ENCODE measurements at regions of chr11 and their contacts with region 1.

Region 1: GRCh38 chr11:66408488-66409214 is 12.2 kb upstream of the NPAS4 start:
- DNase-seq: peak; percentile 88 to 94 (median 91)
- H3K4me3 ChIP-seq: peak overlapping the region in 5 of 7 experiments; percentile 14 to 48 (median 25)
- H3K27ac ChIP-seq: no peak overlapping the region
- H3K4me1 ChIP-seq: peaks cover 0 to 9% (median 6%) of the 10 kb centered on the region in 4 experiments
- H3K27me3 ChIP-seq: peaks cover 2 to 65% (median 26%) of the 10 kb centered on the region in 5 experiments

Region 2: DNA sequence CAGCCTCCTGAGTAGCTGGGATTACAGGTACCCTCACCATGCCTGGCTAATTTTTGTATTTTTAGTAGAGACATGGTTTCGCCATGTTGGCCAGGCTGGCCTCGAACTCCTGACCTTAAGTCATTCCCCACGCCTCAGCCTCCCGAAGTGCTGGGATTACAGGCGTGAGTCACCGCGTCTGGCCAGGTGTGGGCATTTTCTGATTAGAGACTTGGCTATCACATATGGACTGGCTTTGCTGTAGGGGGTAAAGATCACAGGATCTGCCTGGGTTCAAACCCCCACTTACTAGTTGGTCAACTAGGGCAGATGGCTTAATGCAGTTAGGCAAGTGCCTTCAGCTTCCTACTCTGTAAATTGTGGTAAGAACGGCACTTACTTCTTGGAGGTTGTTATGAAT is 98.3 kb before region 1 on chr11:
- CTCF ChIA-PET with region 1: no interaction called
- POLR2A ChIA-PET with region 1: no interaction called
- DNase-seq: no peak
- H3K4me3 ChIP-seq: no peak overlapping the region
- H3K27ac ChIP-seq: no peak overlapping the region
- H3K4me1 ChIP-seq: peaks cover 0 to 23% (median 20%) of the 10 kb centered on the region in 4 experiments
- H3K27me3 ChIP-seq: peaks cover 0 to 2% (median 0%) of the 10 kb centered on the region in 5 experiments

Region 3: GRCh38 chr11:66386171-66387069 is 22.2 kb before region 1 on chr11:
- CTCF ChIA-PET with region 1: interaction called, 30 read pairs
- POLR2A ChIA-PET with region 1: no interaction called
- DNase-seq: peak; percentile 78 to 90 (median 79)
- H3K4me3 ChIP-seq: peak overlapping the region in 4 of 7 experiments; percentile 35 to 63 (median 49)
- H3K27ac ChIP-seq: no peak overlapping the region
- H3K4me1 ChIP-seq: peaks cover 0 to 7% (median 4%) of the 10 kb centered on the region in 4 experiments
- H3K27me3 ChIP-seq: peaks cover 0 to 7% (median 0%) of the 10 kb centered on the region in 5 experiments

Region 4: GRCh38 chr11:66421492-66422205 is 13.0 kb after region 1 on chr11:
- CTCF ChIA-PET with region 1: interaction called, 37 read pairs
- POLR2A ChIA-PET with region 1: no interaction called
- DNase-seq: peak; percentile 81 to 90 (median 85)
- H3K4me3 ChIP-seq: no peak overlapping the region
- H3K27ac ChIP-seq: no peak overlapping the region
- H3K4me1 ChIP-seq: peaks cover 0 to 2% (median 0%) of the 10 kb centered on the region in 4 experiments
- H3K27me3 ChIP-seq: peaks cover 0 to 46% (median 21%) of the 10 kb centered on the region in 5 experiments

Region 5: DNA sequence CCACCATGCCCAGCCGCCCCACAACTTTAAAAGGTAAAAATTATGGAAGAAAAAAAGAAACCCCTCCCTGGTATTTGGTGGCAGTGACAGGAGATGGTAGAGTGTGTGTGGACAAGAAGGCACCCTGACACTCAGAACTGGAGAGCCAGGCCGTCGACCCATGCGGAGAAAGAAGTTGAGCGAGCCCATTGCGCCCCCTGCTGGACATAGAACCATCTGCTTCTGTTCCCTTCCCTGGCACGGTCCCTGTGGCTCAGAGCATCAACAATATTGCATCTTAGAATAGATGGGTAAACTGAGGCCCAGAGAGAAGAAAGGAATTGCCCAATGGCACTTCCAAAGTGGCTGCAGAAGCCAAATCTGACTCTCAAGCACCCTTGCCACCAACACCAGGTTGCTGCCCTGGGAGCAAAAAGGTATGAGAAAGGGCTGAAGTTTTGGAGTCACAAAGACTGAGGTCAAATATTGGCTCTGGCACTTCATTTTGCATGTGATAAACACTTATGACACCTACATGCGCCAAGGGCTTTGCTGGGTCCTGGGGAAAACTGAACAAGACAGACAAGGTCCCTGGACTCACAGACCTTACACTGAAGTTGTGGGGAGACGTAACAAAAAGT is 21.4 kb after region 1 on chr11:
- CTCF ChIA-PET with region 1: interaction called, 37 read pairs
- POLR2A ChIA-PET with region 1: no interaction called
- DNase-seq: peak; percentile 67 to 85 (median 77)
- H3K4me3 ChIP-seq: no peak overlapping the region
- H3K27ac ChIP-seq: no peak overlapping the region
- H3K4me1 ChIP-seq: peaks cover 0 to 3% (median 0%) of the 10 kb centered on the region in 4 experiments
- H3K27me3 ChIP-seq: peaks cover 0 to 4% (median 0%) of the 10 kb centered on the region in 5 experiments

Region 6: GRCh38 chr11:66438504-66439466 is 30.1 kb after region 1 on chr11 and contains the start of gene MRPL11:
- CTCF ChIA-PET with region 1: interaction called, 20 read pairs
- POLR2A ChIA-PET with region 1: no interaction called
- DNase-seq: peak; percentile 92 to 95 (median 94)
- H3K4me3 ChIP-seq: peak within 1 kb of the TSS; percentile 55 to 94 (median 84)
- H3K27ac ChIP-seq: peak within 1 kb of the TSS; percentile 85 to 93
- H3K4me1 ChIP-seq: peaks cover 2 to 10% (median 8%) of the 10 kb centered on the region in 4 experiments
- H3K27me3 ChIP-seq: no peaks in the 10 kb centered on the region

Region 7: DNA sequence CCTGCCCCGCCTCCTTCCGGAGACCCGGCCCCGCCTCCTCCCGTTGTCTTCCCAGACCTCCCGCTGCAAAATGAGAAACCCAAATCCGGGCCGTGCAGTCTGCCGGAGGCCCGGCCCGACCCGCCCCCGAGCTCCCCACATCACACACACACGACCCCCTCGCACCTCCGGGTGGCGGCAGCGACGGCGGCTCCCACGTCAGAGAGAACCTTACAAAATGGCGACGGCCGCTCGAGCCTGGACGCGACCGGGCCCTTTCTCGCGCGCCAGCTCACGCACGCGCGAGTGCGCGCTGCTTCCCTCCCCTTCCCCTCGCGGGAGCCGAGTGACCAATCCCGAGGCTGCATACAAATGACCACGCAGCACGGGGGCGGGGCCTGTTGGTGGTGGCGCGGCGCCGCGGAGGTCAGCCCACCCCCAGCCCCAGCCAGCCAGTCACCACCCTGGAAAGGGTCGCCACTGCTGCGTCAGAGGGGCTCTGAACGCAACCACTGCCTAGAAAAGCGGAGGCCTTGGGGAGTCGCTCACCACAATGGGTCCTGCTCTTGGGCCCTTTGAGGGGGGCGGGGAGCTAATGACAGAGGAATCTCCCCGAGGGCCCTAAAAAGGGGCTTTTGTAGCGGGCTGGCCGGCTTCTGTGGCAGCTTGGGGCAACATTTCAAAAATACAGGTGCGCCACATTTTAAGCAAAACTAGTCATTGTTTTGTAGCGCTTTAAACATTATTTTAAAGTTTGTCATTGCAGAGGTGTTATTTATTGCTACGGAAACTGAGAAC is 269.1 kb after region 1 on chr11 and contains the start of gene RBM4B:
- CTCF ChIA-PET with region 1: interaction called, 49 read pairs
- POLR2A ChIA-PET with region 1: no interaction called
- DNase-seq: peak; percentile 97 to 99 (median 99)
- H3K4me3 ChIP-seq: peak within 1 kb of the TSS; percentile 64 to 94 (median 83)
- H3K27ac ChIP-seq: peak within 1 kb of the TSS; percentile 94 to 96
- H3K4me1 ChIP-seq: peaks cover 13 to 37% (median 30%) of the 10 kb centered on the region in 4 experiments
- H3K27me3 ChIP-seq: no peaks in the 10 kb centered on the region